Common myeloid progenitor, CD34-positive (primary cell): ENCODE measurements at regions of chr12 and their contacts with region 1.

Region 1: DNA sequence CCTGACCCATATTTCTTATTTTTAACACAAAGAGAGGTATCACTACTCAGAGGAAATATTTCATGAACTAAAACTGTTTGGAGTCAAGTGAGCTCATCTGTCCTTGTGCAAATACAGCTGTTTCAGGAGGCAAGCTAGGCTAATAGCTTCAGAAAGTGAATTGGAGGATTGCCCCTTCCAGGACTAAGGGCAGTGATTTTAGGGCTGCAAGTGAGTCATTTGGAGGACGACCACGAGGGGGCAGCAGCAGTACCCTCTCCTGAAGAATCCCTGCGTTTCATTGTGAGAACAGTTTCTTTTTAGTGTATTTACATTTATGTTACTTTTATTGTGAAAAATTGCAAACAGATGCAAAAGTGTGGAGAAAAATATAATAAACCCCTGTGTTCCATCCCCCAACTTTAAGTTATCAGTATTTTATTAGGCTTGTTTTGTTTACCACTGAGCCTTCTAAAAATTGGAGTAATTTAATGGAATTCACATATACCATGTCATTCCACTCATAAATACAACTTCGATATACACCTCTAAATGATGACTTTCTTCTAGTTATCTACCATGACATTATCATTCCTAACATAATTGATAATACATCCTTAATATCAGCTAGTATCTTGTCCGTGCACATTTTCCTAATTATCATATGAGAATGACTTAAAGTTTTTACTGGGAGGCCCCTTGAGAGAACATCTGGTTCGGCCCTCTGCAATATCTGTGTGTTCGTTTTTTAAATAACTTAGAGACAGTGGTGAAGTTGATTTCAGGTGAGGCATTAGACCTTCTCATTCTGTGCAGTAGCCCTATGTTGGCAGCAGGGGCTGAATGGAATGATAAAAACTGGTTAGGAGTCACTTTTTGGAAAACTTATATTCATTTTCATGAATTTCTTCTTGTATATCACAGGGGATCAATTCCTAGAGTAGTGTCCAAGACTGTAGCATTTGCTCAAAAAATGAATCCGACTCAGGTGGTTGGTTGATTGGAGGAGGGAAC is 13.7 kb downstream of the FOXJ2 start:
- DNase-seq: peak; percentile 80 to 91 (median 86)
- H3K4me3 ChIP-seq: no peak overlapping the region
- H3K27ac ChIP-seq: no peak overlapping the region
- H3K4me1 ChIP-seq: no peaks in the 10 kb centered on the region
- H3K27me3 ChIP-seq: no peaks in the 10 kb centered on the region

Region 2: DNA sequence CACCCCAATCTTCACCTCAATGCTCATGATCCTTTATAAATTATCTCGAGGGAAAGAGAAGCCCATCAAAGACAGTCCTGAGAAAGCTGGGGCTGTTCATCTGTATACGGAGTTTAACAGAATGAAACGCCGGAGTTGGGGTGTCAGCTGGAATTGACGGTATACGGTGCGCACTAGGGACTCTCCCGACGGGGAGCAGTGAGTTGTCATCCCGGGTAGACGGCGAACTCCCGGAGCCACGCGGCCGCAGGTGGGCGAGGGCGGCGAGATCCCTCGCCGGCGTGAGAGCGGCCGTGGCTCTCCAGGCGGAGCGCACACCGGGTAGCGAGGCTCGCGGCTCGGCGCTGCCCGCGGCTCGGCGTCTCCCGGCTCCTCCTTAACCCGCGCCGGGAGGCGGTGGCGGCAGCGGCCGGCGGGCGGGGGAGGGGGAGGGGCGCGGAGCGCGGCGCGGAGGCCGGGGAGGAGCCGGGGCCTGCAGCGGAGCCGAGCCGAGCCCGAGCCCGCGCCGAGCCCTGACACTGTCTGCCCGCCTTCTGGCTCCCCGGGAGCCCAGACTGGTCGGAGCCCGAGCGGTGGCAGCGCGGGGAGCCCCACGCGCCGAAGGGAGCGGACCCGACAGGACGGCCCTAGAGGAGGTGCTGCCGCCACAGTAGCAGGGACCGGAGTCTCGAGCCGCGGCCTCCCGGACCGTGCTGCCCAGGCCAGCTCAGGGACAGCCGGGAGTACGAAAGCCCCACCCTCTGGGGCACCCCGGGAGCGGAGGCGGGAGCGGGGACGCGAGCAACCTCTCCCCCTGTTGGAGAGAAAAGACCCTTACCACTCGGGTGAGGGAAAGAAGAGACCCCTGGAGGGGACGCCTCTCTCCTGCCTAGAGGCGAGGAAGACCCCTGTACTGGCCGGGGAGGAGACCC is 13.8 kb before region 1 on chr12 and contains the start of gene FOXJ2:
- CTCF ChIA-PET with region 1: interaction called, 28 read pairs
- POLR2A ChIA-PET with region 1: interaction called, 3 read pairs
- DNase-seq: peak; percentile 60 to 79 (median 76)
- H3K4me3 ChIP-seq: peak within 1 kb of the TSS; percentile 74 to 93 (median 84)
- H3K27ac ChIP-seq: peak within 1 kb of the TSS; percentile 54 to 84
- H3K4me1 ChIP-seq: peaks cover 24 to 55% (median 46%) of the 10 kb centered on the region in 4 experiments
- H3K27me3 ChIP-seq: no peaks in the 10 kb centered on the region

Region 3: DNA sequence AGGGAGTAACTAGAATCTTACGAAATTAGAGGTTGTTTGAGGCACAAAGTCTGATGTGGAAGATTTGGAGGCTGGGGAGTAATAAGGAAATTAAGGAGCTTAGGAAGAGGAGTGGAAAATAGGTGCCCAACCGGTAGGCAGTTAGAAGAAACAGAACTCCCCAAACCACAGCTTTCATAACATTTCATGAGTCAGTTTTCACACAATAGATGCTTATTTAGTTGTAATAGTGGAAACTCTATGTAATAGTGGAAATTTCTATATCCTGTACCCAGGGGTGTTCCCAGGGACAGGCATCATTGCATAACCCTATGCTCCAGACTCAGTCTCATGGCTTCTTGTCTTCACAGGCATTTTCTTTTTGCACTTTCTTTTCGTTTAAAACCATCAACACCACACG is 11.6 kb after region 1 on chr12:
- CTCF ChIA-PET with region 1: interaction called, 11 read pairs
- POLR2A ChIA-PET with region 1: no interaction called
- DNase-seq: no peak
- H3K4me3 ChIP-seq: no peak overlapping the region
- H3K27ac ChIP-seq: no peak overlapping the region
- H3K4me1 ChIP-seq: peaks cover 0 to 14% (median under 1%) of the 10 kb centered on the region in 4 experiments
- H3K27me3 ChIP-seq: no peaks in the 10 kb centered on the region

Region 4: GRCh38 chr12:8065991-8066594 is 19.8 kb after region 1 on chr12 and contains the start of gene C3AR1:
- CTCF ChIA-PET with region 1: interaction called, 13 read pairs
- POLR2A ChIA-PET with region 1: no interaction called
- DNase-seq: peak; percentile 78 to 93 (median 87)
- H3K4me3 ChIP-seq: peak within 1 kb of the TSS in 6 of 7 experiments; percentile 4 to 57 (median 20)
- H3K27ac ChIP-seq: peak within 1 kb of the TSS; percentile 25 to 65
- H3K4me1 ChIP-seq: peaks cover 16 to 63% (median 35%) of the 10 kb centered on the region in 4 experiments
- H3K27me3 ChIP-seq: no peaks in the 10 kb centered on the region